Heart left ventricle (tissue), 16 donors: ENCODE measurements at regions of chr9 and their contacts with region 1.

Region 1: DNA sequence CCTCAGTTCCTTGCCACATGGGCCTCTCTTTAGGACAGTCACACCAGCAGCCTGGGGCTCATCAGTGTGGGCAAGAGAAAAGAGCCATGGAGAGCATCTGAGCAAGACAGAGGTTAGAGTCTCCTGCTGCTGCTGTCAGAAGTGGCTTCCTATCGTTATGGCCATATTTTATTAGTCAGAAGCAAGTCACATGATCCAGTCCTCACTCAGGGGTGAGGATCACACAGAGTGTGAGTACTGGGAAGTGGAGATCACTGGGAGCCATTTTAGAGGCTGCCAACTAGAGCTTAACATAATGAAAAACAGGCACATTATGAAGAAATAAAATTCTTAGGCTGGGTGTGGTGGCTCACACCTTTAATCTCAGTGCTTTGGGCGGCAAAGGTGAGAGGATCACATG is 62.0 kb downstream of the DIRAS2 start:
- DNase-seq: no peak
- ATAC-seq: no peak
- H3K4me3 ChIP-seq: no peak overlapping the region
- H3K27ac ChIP-seq: no peak overlapping the region
- H3K4me1 ChIP-seq: no peaks in the 10 kb centered on the region
- H3K27me3 ChIP-seq: peaks cover 0 to 4% (median 0%) of the 10 kb centered on the region in 9 donors
- CTCF ChIP-seq: no peak
- POLR2A ChIP-seq: no peak

Region 2: GRCh38 chr9:90477535-90477934 is 103.0 kb before region 1 on chr9:
- intact Hi-C with region 1: no loop called
- DNase-seq: no peak
- ATAC-seq: no peak
- H3K4me3 ChIP-seq: no peak overlapping the region
- H3K27ac ChIP-seq: no peak overlapping the region
- H3K4me1 ChIP-seq: no peaks in the 10 kb centered on the region
- H3K27me3 ChIP-seq: peaks cover 0 to 4% (median 0%) of the 10 kb centered on the region in 9 donors
- CTCF ChIP-seq: no peak
- POLR2A ChIP-seq: no peak

Region 3: GRCh38 chr9:90539286-90539685 is 41.3 kb before region 1 on chr9:
- intact Hi-C with region 1: loop called in 1 of 10 experiments (anchors 5 kb)
- DNase-seq: no peak
- ATAC-seq: no peak
- H3K4me3 ChIP-seq: no peak overlapping the region
- H3K27ac ChIP-seq: no peak overlapping the region
- H3K4me1 ChIP-seq: no peaks in the 10 kb centered on the region
- H3K27me3 ChIP-seq: peaks cover 0 to 11% (median 0%) of the 10 kb centered on the region in 9 donors
- CTCF ChIP-seq: no peak
- POLR2A ChIP-seq: no peak

Region 4: DNA sequence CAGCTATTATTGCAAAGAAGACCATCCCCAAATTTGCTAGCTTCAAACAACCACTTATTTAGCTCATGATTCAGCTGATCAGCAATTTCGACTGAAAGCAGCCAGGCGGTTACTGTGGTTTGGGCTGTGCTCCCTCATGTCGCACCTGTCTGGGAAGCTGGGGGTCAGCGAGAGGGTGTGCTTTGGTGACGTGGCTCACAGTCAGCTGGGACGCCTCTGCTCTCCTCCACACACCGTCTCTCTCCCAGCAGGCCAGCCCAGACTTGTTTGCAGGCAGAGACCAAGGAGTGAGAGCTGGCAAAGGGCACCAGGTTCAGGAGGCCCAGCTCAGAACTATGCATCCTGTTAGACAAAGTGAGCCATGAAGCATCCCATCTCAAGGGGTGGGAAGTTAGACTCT is 362.0 kb after region 1 on chr9:
- intact Hi-C with region 1: no loop called
- DNase-seq: no peak
- ATAC-seq: no peak
- H3K4me3 ChIP-seq: no peak overlapping the region
- H3K27ac ChIP-seq: no peak overlapping the region
- H3K4me1 ChIP-seq: no peaks in the 10 kb centered on the region
- H3K27me3 ChIP-seq: peaks cover 0 to 5% (median 0%) of the 10 kb centered on the region in 9 donors
- CTCF ChIP-seq: no peak
- POLR2A ChIP-seq: no peak